ENCODE measurements at regions of chr5 and their contacts with region 1.

Region 1: DNA sequence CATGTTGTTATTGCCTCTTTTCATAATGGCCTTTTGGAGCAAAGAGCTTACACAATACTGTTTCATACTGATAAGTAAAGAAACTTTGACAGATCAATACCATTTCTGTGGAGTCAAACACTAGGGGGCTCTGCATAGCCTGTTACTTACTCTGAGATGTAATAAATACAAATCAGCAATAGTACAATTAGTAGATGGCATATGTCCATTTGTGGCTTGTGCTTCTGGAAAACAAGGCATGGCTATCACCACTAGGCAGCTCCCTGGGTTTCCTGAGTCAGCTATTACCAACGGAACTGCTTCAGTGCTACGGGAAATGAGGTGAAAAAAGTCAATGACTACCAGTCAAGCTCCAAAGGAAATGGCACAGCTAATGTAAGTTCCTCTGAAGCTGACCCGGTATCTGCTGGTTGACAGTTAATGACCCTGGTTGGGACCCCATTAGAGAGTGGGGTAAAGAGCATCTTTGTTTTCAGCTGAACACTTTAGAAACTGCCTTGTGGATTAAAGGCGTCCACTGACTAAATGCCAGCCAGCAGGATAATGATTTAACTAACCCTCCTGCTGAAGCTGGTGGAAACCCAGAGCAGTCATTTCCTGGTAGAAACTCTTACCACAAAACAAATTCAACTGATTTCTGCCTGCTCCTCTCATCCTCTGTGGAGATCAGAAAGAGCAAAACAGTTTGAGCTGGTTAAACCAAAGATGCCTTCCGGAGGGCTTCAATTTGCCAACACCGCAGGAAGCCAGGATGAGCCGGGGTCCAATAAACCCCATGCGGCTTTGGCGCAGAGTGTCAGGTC is 69.0 kb upstream of the FAM169A start:
- DNase-seq: no peak
- H3K4me3 ChIP-seq: no peak overlapping the region
- H3K27ac ChIP-seq: no peak overlapping the region
- H3K27me3 ChIP-seq: no peaks in the 10 kb centered on the region
- CTCF ChIP-seq: peak; percentile 37

Region 2: GRCh38 chr5:74919487-74919886 is 15.7 kb before region 1 on chr5:
- CTCF ChIA-PET with region 1: interaction called, 10 read pairs
- POLR2A ChIA-PET with region 1: no interaction called
- DNase-seq: peak; percentile 18
- H3K4me3 ChIP-seq: no peak overlapping the region
- H3K27ac ChIP-seq: no peak overlapping the region
- H3K27me3 ChIP-seq: no peaks in the 10 kb centered on the region
- CTCF ChIP-seq: peak; percentile 66